Activated CD4-positive, alpha-beta T cell treated with anti-CD3 and anti-CD28 coated beads, Interleukin-2, amount 10 ng/mL, durations not matched to agents 24 days and 14 days (primary cell): ENCODE measurements at regions of chr6 and their contacts with region 1.

Region 1: GRCh38 chr6:158793432-158793831 is 25.7 kb downstream of the EZR start:
- DNase-seq: no peak
- H3K4me3 Mint-ChIP-seq: no peak overlapping the region
- H3K27ac Mint-ChIP-seq: no peak overlapping the region
- H3K4me1 Mint-ChIP-seq: peaks cover 72% of the 10 kb centered on the region
- H3K27me3 Mint-ChIP-seq: no peaks in the 10 kb centered on the region

Region 2: DNA sequence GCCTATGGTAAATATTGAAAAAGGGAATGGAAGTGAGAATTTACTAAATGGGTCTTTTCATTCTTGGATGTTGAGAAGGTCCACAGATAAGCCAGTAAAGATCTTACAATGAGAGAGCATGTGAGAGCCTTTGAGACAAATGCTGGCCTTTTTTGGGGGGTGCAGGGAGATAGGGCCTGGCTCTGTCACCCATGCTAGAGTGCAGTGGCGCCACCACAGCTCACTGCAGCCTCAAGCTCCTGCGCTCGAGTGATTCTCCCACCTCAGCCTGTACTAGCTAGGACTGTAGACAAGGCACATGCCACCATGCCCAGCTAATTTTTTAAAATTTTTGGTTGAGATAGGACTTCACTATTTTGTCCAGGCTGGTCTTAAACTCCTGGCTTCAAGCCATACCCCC is 296.7 kb before region 1 on chr6:
- intact Hi-C with region 1: no loop called
- DNase-seq: no peak
- H3K4me3 Mint-ChIP-seq: no peak overlapping the region
- H3K27ac Mint-ChIP-seq: no peak overlapping the region
- H3K4me1 Mint-ChIP-seq: no peaks in the 10 kb centered on the region
- H3K27me3 Mint-ChIP-seq: no peaks in the 10 kb centered on the region

Region 3: GRCh38 chr6:158807515-158808441 is 14.3 kb after region 1 on chr6:
- intact Hi-C with region 1: loop called (anchors 2 kb)
- DNase-seq: no peak
- H3K4me3 Mint-ChIP-seq: no peak overlapping the region
- H3K27ac Mint-ChIP-seq: peak overlapping the region; percentile 40
- H3K4me1 Mint-ChIP-seq: peaks cover 78% of the 10 kb centered on the region
- H3K27me3 Mint-ChIP-seq: no peaks in the 10 kb centered on the region

Region 4: GRCh38 chr6:158869826-158870648 is 76.6 kb after region 1 on chr6:
- intact Hi-C with region 1: loop called (anchors 1 kb)
- DNase-seq: peak; percentile 96
- H3K4me3 Mint-ChIP-seq: peak overlapping the region; percentile 86
- H3K27ac Mint-ChIP-seq: peak overlapping the region; percentile 98
- H3K4me1 Mint-ChIP-seq: peaks cover 29% of the 10 kb centered on the region
- H3K27me3 Mint-ChIP-seq: peaks cover 4% of the 10 kb centered on the region

Region 5: GRCh38 chr6:158972241-158973233 is 179.1 kb after region 1 on chr6:
- intact Hi-C with region 1: loop called (anchors 1 kb)
- DNase-seq: peak; percentile 63
- H3K4me3 Mint-ChIP-seq: no peak overlapping the region
- H3K27ac Mint-ChIP-seq: no peak overlapping the region
- H3K4me1 Mint-ChIP-seq: peaks cover 4% of the 10 kb centered on the region
- H3K27me3 Mint-ChIP-seq: peaks cover 2% of the 10 kb centered on the region